GM10248 (cell line): ENCODE measurements at regions of chr15 and their contacts with region 1.

Region 1: GRCh38 chr15:52193791-52194190 is 2.6 kb upstream of the GNB5 start:
- DNase-seq: no peak
- CTCF ChIP-seq: no peak

Region 2: GRCh38 chr15:52179278-52180195 is 14.3 kb before region 1 on chr15:
- CTCF ChIA-PET with region 1: interaction called, 25 read pairs
- POLR2A ChIA-PET with region 1: no interaction called
- DNase-seq: peak; percentile 91
- CTCF ChIP-seq: no peak

Region 3: DNA sequence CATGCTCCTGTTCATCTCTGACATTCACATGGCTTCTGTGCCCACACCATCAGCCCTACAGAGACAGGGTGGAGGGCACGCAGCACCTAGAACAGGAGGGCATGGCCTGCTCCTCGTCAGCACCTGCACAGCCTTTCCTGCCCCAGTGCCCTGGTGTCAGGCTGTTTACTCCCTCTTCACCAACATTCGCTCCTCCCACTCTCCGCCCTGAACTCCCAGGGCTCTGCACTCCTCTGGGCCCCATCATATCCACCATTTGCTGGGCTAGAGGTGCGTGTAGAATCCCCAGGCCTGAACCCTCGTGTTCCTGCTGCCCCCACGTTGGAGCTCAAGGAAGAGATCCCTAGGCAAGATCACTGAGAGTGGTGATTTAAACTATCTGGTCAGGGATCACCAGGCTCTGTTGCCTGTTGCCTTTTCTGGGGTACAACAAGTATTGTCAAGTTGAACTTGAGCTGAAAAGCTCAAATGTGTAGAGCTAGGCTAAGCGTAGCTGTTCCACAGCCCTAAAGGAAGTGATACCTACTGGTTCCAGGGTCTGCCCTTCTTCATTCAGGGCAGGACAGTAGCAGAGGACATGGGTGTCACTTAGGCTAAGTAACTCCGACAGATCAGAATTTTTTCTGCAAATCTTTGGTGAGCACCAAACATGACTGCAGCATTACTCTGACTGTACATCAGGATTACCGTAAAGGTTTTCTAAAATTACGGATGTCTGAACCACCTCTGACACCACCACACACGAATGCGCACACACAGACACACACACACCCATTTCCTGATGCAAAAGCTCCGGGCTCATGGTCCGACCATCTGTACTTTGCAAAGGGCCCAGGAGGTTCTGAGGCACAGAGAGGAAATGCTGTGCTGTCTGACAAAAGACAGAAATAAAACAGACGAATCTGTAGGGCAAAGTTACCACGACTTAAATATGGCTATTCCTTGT is 41.1 kb after region 1 on chr15:
- CTCF ChIA-PET with region 1: no interaction called
- POLR2A ChIA-PET with region 1: no interaction called
- DNase-seq: peak; percentile 43
- CTCF ChIP-seq: no peak